ENCODE measurements at regions of chr1 and their contacts with region 1.

Region 1: GRCh38 chr1:214337511-214337910 is 56.6 kb downstream of the SMYD2 start:
- DNase-seq: no peak
- H3K4me3 ChIP-seq: no peak overlapping the region
- H3K27ac ChIP-seq: no peak overlapping the region
- H3K4me1 ChIP-seq: peaks cover 11% of the 10 kb centered on the region
- H3K27me3 ChIP-seq: no peaks in the 10 kb centered on the region
- CTCF ChIP-seq: no peak
- POLR2A ChIP-seq: no peak

Region 2: DNA sequence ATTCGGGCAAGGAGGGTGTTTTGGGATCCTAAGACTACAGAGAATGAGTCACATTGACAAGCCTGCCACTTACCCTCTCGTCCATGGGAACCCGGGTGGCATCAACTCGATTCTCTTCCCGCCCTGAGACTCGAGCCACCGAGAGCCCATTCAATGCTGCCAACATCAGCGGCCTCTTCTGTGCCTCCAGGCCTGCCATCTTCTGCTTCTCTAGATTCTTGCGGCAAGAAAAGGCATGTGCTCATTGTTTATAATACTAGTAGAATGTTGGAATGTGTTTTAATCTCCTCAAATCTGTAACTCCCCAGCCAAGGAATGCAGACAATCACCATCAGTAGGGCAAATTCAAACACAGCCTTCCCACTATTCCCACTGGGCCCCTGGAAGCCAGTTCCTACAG is 40.4 kb after region 1 on chr1:
- intact Hi-C with region 1: loop called (anchors 5 kb)
- DNase-seq: peak; percentile 32
- H3K4me3 ChIP-seq: no peak overlapping the region
- H3K27ac ChIP-seq: peak overlapping the region; percentile 1 to 17
- H3K4me1 ChIP-seq: no peaks in the 10 kb centered on the region
- H3K27me3 ChIP-seq: no peaks in the 10 kb centered on the region
- CTCF ChIP-seq: no peak
- POLR2A ChIP-seq: no peak